ENCODE measurements at regions of chr16 and their contacts with region 1.

Region 1: GRCh38 chr16:68310761-68311511 is at the starts of genes PRMT7 and SLC7A6OS:
- DNase-seq: peak; percentile 67 to 93
- H3K4me3 ChIP-seq: peak within 1 kb of the TSS; percentile 69 to 96 (median 86)
- H3K27ac ChIP-seq: peak within 1 kb of the TSS; percentile 87
- H3K4me1 ChIP-seq: peaks cover 3 to 6% (median 4%) of the 10 kb centered on the region in 4 experiments; a peak in 5 of 7 replicates
- H3K27me3 ChIP-seq: no peaks in the 10 kb centered on the region
- CTCF ChIP-seq: peak in 2 of 3 experiments; percentile 14 to 24; a peak in 2 of 4 replicates
- EP300 ChIP-seq: no peak
- POLR2A ChIP-seq: peak; percentile 58 to 95
- RAD21 ChIP-seq: peak in 1 of 2 experiments; percentile 22; a peak in 1 of 4 replicates
- total RNA-seq, gene PRMT7: 48.2 and 48.7 TPM in 2 replicates
- total RNA-seq, gene SLC7A6OS: 16.4 and 21.3 TPM in 2 replicates

Region 2: GRCh38 chr16:68237243-68238028 is 73.5 kb before region 1 on chr16:
- CTCF ChIA-PET with region 1: interaction called, 4 read pairs
- POLR2A ChIA-PET with region 1: interaction called, 21 read pairs
- DNase-seq: peak; percentile 97 to 99
- H3K4me3 ChIP-seq: peak overlapping the region; percentile 59 to 85 (median 82)
- H3K27ac ChIP-seq: peak overlapping the region; percentile 84
- H3K4me1 ChIP-seq: peaks cover 0 to 28% (median 20%) of the 10 kb centered on the region in 4 experiments; a peak in 5 of 7 replicates
- H3K27me3 ChIP-seq: no peaks in the 10 kb centered on the region
- CTCF ChIP-seq: no peak
- EP300 ChIP-seq: peak in 1 of 2 experiments; percentile 24; a peak in 1 of 3 replicates
- POLR2A ChIP-seq: peak; percentile 71 to 97
- RAD21 ChIP-seq: no peak

Region 3: GRCh38 chr16:68259007-68259825 is 51.7 kb before region 1 on chr16:
- CTCF ChIA-PET with region 1: interaction called, 221 read pairs
- POLR2A ChIA-PET with region 1: interaction called, 22 read pairs
- DNase-seq: no peak
- H3K4me3 ChIP-seq: no peak overlapping the region
- H3K27ac ChIP-seq: no peak overlapping the region
- H3K4me1 ChIP-seq: no peaks in the 10 kb centered on the region; a peak in 1 of 7 replicates
- H3K27me3 ChIP-seq: peaks cover 0 to 7% (median 0%) of the 10 kb centered on the region in 4 experiments; a peak in 2 of 7 replicates
- CTCF ChIP-seq: no peak
- EP300 ChIP-seq: no peak
- POLR2A ChIP-seq: no peak
- RAD21 ChIP-seq: no peak

Region 4: GRCh38 chr16:68289621-68290329 is 21.2 kb before region 1 on chr16:
- CTCF ChIA-PET with region 1: no interaction called
- POLR2A ChIA-PET with region 1: interaction called, 19 read pairs
- DNase-seq: no peak
- H3K4me3 ChIP-seq: no peak overlapping the region
- H3K27ac ChIP-seq: no peak overlapping the region
- H3K4me1 ChIP-seq: no peaks in the 10 kb centered on the region
- H3K27me3 ChIP-seq: no peaks in the 10 kb centered on the region
- CTCF ChIP-seq: no peak
- EP300 ChIP-seq: no peak
- POLR2A ChIP-seq: no peak
- RAD21 ChIP-seq: no peak

Region 5: DNA sequence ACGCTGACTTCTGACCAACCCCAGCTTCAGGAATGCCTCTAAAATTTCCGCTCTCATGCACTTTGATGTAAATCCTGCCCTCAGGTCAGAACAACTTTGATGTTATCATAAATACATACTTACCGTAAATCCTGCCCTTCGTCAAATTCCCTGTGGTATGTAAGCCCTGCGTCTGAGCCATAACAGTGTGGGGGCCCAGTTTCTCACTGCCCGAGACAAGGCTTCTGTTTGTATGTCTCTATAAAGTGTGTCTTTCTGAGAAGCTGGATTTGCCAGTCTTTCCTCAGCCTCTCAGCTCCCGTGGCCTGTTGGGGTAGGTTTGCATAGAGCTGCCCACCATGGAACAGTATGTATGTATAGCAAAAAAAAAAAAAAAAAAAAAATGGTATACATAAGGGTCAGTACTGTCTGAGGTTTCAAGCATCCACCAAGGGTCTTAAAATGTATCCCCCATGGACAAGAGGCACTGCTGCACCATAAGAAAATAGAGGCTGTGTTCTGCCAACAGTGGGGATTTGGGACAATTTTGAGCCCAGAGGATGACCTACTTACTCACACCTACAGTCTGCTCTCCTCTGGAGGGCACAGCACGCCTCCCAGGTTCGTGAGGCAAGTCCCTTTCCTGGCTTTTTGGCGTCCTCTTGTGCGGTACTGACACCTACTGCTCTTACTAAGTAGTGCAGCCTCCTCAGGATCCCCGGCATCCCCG is 17.4 kb after region 1 on chr16:
- CTCF ChIA-PET with region 1: interaction called, 16 read pairs
- POLR2A ChIA-PET with region 1: interaction called, 44 read pairs
- DNase-seq: peak; percentile 69 to 90
- H3K4me3 ChIP-seq: no peak overlapping the region
- H3K27ac ChIP-seq: no peak overlapping the region
- H3K4me1 ChIP-seq: peaks cover 0 to 4% (median 1%) of the 10 kb centered on the region in 4 experiments; a peak in 2 of 7 replicates
- H3K27me3 ChIP-seq: no peaks in the 10 kb centered on the region
- CTCF ChIP-seq: peak; percentile 86 to 96 (median 94)
- EP300 ChIP-seq: no peak
- POLR2A ChIP-seq: no peak
- RAD21 ChIP-seq: peak; percentile 95

Measured in H1 (cell line).